AG04450 (cell line): ENCODE measurements at regions of chr4 and their contacts with region 1.

Region 1: GRCh38 chr4:169492438-169493163 is 119.8 kb downstream of the NEK1 start:
- DNase-seq: no peak
- H3K4me3 ChIP-seq: no peak overlapping the region
- H3K27ac ChIP-seq: peak overlapping the region; percentile 11
- H3K27me3 ChIP-seq: no peaks in the 10 kb centered on the region
- CTCF ChIP-seq: peak; percentile 87

Region 2: DNA sequence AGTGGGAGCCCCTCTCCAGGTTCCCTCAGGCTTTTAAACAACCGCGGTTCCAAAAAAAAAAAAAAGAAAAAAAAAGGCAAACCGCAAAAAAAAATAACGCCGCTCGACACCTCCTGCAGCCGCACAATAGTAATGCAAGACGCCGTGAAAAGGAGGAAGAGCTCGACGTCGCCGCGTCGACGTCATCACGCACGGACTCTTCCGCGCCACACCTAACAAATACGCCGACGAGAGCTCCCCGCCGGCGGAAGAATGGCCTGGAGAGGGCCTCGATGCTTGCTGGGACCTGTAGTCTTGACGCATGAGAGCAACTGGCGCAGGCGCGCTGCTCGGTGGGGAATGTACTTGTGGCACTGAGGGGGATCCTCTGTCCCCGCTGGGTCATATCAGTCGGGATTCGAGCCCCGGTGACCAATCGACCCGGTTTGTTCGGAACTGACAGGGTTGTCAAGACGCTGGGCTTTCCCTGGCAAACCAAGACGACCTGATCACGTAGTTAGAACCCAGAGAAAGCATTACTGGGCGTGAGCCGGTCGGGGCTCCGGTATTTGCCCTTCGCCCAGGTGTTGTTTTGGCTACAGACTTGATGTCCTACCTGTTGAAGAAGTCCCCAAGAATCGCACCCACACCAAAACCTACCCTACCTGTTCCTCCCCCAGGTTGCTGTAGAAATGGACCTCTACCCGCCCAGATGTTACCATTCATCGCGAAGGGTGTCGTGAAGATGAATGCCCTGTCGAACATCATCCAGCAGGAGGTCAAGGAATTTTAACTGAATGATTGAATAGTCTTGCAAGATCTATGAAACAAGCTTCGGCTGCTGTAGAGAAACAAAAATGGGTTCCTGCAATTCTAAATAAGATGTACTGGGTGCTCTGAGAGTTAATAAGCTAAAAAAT is 482.2 kb before region 1 on chr4 and contains the start of gene CBR4:
- CTCF ChIA-PET with region 1: interaction called, 15 read pairs
- POLR2A ChIA-PET with region 1: interaction called, 4 read pairs
- DNase-seq: peak; percentile 96
- H3K4me3 ChIP-seq: peak within 1 kb of the TSS; percentile 83
- H3K27ac ChIP-seq: peak within 1 kb of the TSS; percentile 92
- H3K27me3 ChIP-seq: no peaks in the 10 kb centered on the region
- CTCF ChIP-seq: peak; percentile 43
- polyA plus RNA-seq, gene CBR4: 4.2 and 4.5 TPM in 2 replicates

Region 3: DNA sequence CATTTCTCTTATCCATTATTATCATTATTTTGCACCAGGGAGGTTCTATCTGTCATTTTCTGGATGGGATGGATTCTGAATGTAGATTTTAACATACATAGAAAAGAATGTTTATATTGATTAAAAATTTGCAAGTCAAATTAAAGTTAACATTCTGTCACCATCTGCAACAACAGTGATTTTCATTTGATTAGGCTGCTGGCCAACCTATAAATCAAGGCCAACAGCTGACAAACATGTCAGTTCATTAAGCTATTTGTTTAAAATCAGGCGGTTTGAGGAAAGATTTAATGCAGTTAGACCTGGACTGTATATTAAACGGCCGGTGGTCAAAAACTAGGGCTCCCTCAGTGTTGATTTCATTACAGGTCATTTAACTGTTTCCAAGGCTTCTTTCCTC is 373.1 kb before region 1 on chr4:
- CTCF ChIA-PET with region 1: interaction called, 10 read pairs
- POLR2A ChIA-PET with region 1: no interaction called
- DNase-seq: no peak
- H3K4me3 ChIP-seq: no peak overlapping the region
- H3K27ac ChIP-seq: no peak overlapping the region
- H3K27me3 ChIP-seq: no peaks in the 10 kb centered on the region
- CTCF ChIP-seq: no peak

Region 4: GRCh38 chr4:169506903-169507302 is 14.3 kb after region 1 on chr4:
- CTCF ChIA-PET with region 1: interaction called, 15 read pairs
- POLR2A ChIA-PET with region 1: no interaction called
- DNase-seq: no peak
- H3K4me3 ChIP-seq: no peak overlapping the region
- H3K27ac ChIP-seq: no peak overlapping the region
- H3K27me3 ChIP-seq: no peaks in the 10 kb centered on the region
- CTCF ChIP-seq: no peak